Left lung (tissue), 14 donors: ENCODE measurements at regions of chr16 and their contacts with region 1.

Region 1: DNA sequence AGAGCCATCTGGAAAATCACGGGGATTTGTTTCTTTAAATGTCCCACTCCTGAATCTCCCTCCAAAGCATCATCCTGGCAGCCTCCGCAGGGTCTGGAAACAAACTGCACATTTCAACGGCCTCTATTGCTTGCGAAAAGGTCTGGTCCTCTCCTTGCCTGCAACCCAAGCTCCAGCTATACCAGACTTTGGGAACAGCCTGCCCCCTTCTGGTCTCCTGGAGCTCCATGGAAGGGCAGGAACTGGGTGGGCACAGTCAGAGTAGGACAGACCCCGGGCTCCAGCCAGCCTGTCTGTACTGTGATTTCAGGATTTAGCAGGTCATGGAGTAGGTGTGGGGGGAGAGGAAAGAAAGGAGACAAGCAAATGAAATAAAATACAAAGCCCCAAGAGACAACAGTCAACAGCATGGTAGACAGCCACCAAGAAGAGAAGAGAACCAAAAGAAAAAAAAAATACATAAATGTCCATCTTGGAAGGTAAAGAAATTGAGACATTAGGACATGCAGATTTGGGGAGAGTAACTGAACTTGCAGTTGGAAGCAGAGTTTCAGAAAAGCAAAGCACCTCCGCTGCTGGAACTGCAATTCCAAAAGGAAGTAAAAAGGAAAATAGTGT is 2.7 kb downstream of the XYLT1 start:
- DNase-seq: peak in 2 of 4 donors; percentile 70 to 82
- ATAC-seq: peak; percentile 80
- H3K4me3 ChIP-seq: no peak overlapping the region
- H3K27ac ChIP-seq: no peak overlapping the region
- H3K4me1 ChIP-seq: peaks cover 0 to 43% of the 10 kb centered on the region in 2 donors
- H3K27me3 ChIP-seq: peaks cover 8 to 31% of the 10 kb centered on the region in 2 donors
- CTCF ChIP-seq: peak; percentile 44 to 53

Region 2: GRCh38 chr16:17224879-17225281 is 243.2 kb before region 1 on chr16:
- intact Hi-C with region 1: loop called in 1 of 2 experiments (anchors 10 kb)
- DNase-seq: peak in 2 of 4 donors; percentile 39 to 51
- ATAC-seq: peak; percentile 55
- H3K4me3 ChIP-seq: no peak overlapping the region
- H3K27ac ChIP-seq: no peak overlapping the region
- H3K4me1 ChIP-seq: peaks cover 4 to 24% of the 10 kb centered on the region in 2 donors
- H3K27me3 ChIP-seq: no peaks in the 10 kb centered on the region
- CTCF ChIP-seq: no peak

Region 3: DNA sequence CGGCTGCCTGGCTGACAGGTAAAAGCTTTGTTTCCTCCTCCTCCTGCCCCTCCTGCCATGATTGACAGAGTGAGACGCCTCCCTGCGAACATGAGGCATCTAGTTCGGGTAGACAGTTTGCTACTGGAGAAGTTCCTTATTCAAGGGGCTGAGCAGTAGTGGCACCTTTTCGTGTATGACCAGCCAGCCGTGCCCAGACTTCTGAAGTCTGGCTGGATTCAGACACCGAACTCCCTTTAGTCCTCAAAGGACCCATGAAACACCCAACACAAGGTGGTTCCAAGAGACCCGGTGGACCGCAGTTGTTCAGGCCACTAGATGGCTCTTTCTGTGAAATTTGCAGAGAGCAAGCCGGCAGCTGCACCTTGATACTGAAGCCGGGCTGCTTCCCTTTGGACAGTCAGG is 190.1 kb before region 1 on chr16:
- intact Hi-C with region 1: loop called in 1 of 2 experiments (anchors 10 kb)
- DNase-seq: no peak
- ATAC-seq: peak; percentile 25
- H3K4me3 ChIP-seq: no peak overlapping the region
- H3K27ac ChIP-seq: no peak overlapping the region
- H3K4me1 ChIP-seq: peaks cover 0 to 6% of the 10 kb centered on the region in 2 donors
- H3K27me3 ChIP-seq: no peaks in the 10 kb centered on the region
- CTCF ChIP-seq: peak in 1 of 2 donors; percentile 26